B cell (primary cell): ENCODE measurements at regions of chr12 and their contacts with region 1.

Region 1: GRCh38 chr12:64759035-64759901 is at the start of gene GNS:
- DNase-seq: peak; percentile 94
- ATAC-seq: peak; percentile 92
- H3K4me3 ChIP-seq: peak within 1 kb of the TSS; percentile 67 to 89 (median 84)
- H3K4me3 Mint-ChIP-seq: peak within 1 kb of the TSS; percentile 94
- H3K27ac ChIP-seq: peak within 1 kb of the TSS; percentile 48 to 86
- H3K27ac Mint-ChIP-seq: peak within 1 kb of the TSS; percentile 94
- H3K4me1 ChIP-seq: peaks cover 24 to 25% of the 10 kb centered on the region in 2 donors
- H3K4me1 Mint-ChIP-seq: peaks cover 41% of the 10 kb centered on the region
- H3K27me3 ChIP-seq: no peaks in the 10 kb centered on the region
- H3K27me3 Mint-ChIP-seq: no peaks in the 10 kb centered on the region
- CTCF ChIP-seq: no peak
- total RNA-seq, gene GNS: 26.7 and 31.7 TPM in 2 replicates

Region 2: GRCh38 chr12:64451687-64452558 is 307.3 kb before region 1 on chr12 and contains the start of gene TBK1:
- CTCF ChIA-PET with region 1: no interaction called
- POLR2A ChIA-PET with region 1: no interaction called
- intact Hi-C with region 1: loop called (anchors 5 kb)
- DNase-seq: peak; percentile 82
- ATAC-seq: peak; percentile 79
- H3K4me3 ChIP-seq: peak within 1 kb of the TSS; percentile 66 to 97 (median 90)
- H3K4me3 Mint-ChIP-seq: peak within 1 kb of the TSS; percentile 96
- H3K27ac ChIP-seq: peak within 1 kb of the TSS; percentile 63 to 77
- H3K27ac Mint-ChIP-seq: peak within 1 kb of the TSS; percentile 92
- H3K4me1 ChIP-seq: peaks cover 5 to 12% of the 10 kb centered on the region in 2 donors
- H3K4me1 Mint-ChIP-seq: peaks cover 38% of the 10 kb centered on the region
- H3K27me3 ChIP-seq: no peaks in the 10 kb centered on the region
- H3K27me3 Mint-ChIP-seq: no peaks in the 10 kb centered on the region
- CTCF ChIP-seq: peak; percentile 38
- total RNA-seq, gene TBK1: 38.5 and 46.9 TPM in 2 replicates

Region 3: GRCh38 chr12:64733857-64734256 is 25.4 kb before region 1 on chr12:
- CTCF ChIA-PET with region 1: no interaction called
- POLR2A ChIA-PET with region 1: no interaction called
- intact Hi-C with region 1: no loop called
- DNase-seq: no peak
- ATAC-seq: no peak
- H3K4me3 ChIP-seq: no peak overlapping the region
- H3K4me3 Mint-ChIP-seq: no peak overlapping the region
- H3K27ac ChIP-seq: no peak overlapping the region
- H3K27ac Mint-ChIP-seq: no peak overlapping the region
- H3K4me1 ChIP-seq: peaks cover 10 to 13% of the 10 kb centered on the region in 2 donors
- H3K4me1 Mint-ChIP-seq: peaks cover 15% of the 10 kb centered on the region
- H3K27me3 ChIP-seq: no peaks in the 10 kb centered on the region
- H3K27me3 Mint-ChIP-seq: no peaks in the 10 kb centered on the region
- CTCF ChIP-seq: no peak

Region 4: DNA sequence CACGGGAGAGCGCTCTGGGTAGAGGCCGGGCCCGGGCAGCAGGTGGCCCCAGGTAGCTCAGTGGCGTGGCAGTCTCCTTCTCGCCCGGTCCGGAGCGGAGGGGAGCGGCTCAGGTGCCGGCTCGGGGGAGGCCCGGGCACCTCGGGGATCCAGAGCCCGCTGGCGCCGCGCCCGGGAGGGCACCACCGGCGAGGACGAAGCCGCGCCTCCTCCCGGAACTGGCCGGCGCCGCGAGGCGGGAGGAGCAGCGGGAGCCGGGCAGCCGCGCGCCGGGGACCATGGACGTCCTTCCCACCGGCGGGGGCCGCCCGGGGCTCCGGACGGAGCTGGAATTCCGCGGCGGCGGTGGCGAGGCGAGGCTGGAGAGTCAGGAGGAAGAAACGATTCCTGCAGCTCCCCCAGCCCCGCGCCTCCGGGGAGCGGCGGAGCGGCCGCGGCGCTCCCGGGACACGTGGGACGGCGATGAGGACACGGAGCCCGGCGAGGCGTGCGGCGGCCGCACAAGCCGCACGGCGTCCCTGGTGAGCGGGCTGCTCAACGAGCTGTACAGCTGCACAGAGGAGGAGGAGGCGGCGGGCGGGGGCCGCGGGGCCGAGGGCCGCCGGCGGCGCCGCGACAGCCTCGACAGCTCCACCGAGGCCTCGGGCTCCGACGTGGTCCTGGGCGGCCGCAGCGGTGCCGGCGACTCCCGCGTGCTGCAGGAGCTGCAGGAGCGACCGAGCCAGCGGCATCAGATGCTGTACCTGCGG is 21.4 kb after region 1 on chr12:
- CTCF ChIA-PET with region 1: interaction called, 3 read pairs
- POLR2A ChIA-PET with region 1: interaction called, 3 read pairs
- intact Hi-C with region 1: loop called (anchors 2 kb)
- DNase-seq: peak; percentile 46
- ATAC-seq: peak; percentile 62
- H3K4me3 ChIP-seq: peak overlapping the region in 4 of 5 experiments; percentile 41 to 69 (median 56)
- H3K4me3 Mint-ChIP-seq: peak overlapping the region; percentile 91
- H3K27ac ChIP-seq: no peak overlapping the region
- H3K27ac Mint-ChIP-seq: no peak overlapping the region
- H3K4me1 ChIP-seq: peaks cover 22% of the 10 kb centered on the region in 2 donors
- H3K4me1 Mint-ChIP-seq: peaks cover 24% of the 10 kb centered on the region
- H3K27me3 ChIP-seq: peaks cover 0 to 41% (median 22%) of the 10 kb centered on the region in 4 experiments
- H3K27me3 Mint-ChIP-seq: peaks cover 62% of the 10 kb centered on the region
- CTCF ChIP-seq: no peak

Region 5: DNA sequence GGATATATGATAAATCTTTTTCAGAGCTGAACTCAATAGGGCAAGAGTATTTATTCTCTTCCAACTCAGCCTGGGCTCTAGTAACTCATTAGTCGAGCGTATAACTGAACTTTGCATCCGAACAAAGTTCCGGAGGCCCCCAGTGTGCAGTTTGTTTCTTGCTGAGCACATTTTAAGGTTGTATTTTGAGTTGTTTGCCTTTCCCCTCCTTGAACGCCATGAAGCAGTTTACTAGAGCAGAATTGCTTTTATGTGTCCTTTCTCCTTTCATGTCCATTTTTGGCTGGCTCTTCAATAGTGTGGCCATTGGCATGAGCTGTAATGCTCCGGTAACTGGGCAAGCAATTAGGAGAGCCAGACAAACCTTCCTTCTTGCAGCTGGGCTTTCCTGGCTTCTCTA is 256.6 kb after region 1 on chr12:
- CTCF ChIA-PET with region 1: no interaction called
- POLR2A ChIA-PET with region 1: no interaction called
- intact Hi-C with region 1: no loop called
- DNase-seq: no peak
- ATAC-seq: no peak
- H3K4me3 ChIP-seq: no peak overlapping the region
- H3K4me3 Mint-ChIP-seq: no peak overlapping the region
- H3K27ac ChIP-seq: no peak overlapping the region
- H3K27ac Mint-ChIP-seq: no peak overlapping the region
- H3K4me1 ChIP-seq: no peaks in the 10 kb centered on the region
- H3K4me1 Mint-ChIP-seq: no peaks in the 10 kb centered on the region
- H3K27me3 ChIP-seq: peaks cover 0 to 6% (median 2%) of the 10 kb centered on the region in 4 experiments
- H3K27me3 Mint-ChIP-seq: peaks cover 29% of the 10 kb centered on the region
- CTCF ChIP-seq: no peak